Esophagus squamous epithelium (tissue), 5 donors: ENCODE measurements at regions of chr1 and their contacts with region 1.

Region 1: GRCh38 chr1:151156515-151156819 is at the start of gene TNFAIP8L2:
- DNase-seq: no peak
- H3K4me3 ChIP-seq: peak within 1 kb of the TSS; percentile 1 to 51 (median 37)
- H3K27ac ChIP-seq: peak within 1 kb of the TSS; percentile 31 to 57 (median 36)
- H3K4me1 ChIP-seq: peaks cover 0 to 39% (median 0%) of the 10 kb centered on the region in 3 donors
- H3K27me3 ChIP-seq: no peaks in the 10 kb centered on the region
- CTCF ChIP-seq: no peak
- POLR2A ChIP-seq: no peak
- total RNA-seq, gene TNFAIP8L2: 2.3 to 5.7 TPM in 2 of 4 donors, not detected in the others

Region 2: GRCh38 chr1:150995896-150996295 is 160.6 kb before region 1 on chr1:
- intact Hi-C with region 1: no loop called
- DNase-seq: no peak
- H3K4me3 ChIP-seq: peak overlapping the region in 1 of 4 donors; percentile 32
- H3K27ac ChIP-seq: peak overlapping the region in 3 of 4 donors; percentile 30 to 47 (median 40)
- H3K4me1 ChIP-seq: peaks cover 6 to 9% (median 6%) of the 10 kb centered on the region in 3 donors
- H3K27me3 ChIP-seq: no peaks in the 10 kb centered on the region
- CTCF ChIP-seq: peak; percentile 65 to 86 (median 82)
- POLR2A ChIP-seq: no peak

Region 3: GRCh38 chr1:151104630-151105029 is 51.8 kb before region 1 on chr1:
- intact Hi-C with region 1: loop called (anchors 5 kb)
- DNase-seq: no peak
- H3K4me3 ChIP-seq: no peak overlapping the region
- H3K27ac ChIP-seq: no peak overlapping the region
- H3K4me1 ChIP-seq: peaks cover 0 to 12% (median 0%) of the 10 kb centered on the region in 3 donors
- H3K27me3 ChIP-seq: no peaks in the 10 kb centered on the region
- CTCF ChIP-seq: no peak
- POLR2A ChIP-seq: no peak